Heart right ventricle (tissue), 16 donors: ENCODE measurements at regions of chr16 and their contacts with region 1.

Region 1: DNA sequence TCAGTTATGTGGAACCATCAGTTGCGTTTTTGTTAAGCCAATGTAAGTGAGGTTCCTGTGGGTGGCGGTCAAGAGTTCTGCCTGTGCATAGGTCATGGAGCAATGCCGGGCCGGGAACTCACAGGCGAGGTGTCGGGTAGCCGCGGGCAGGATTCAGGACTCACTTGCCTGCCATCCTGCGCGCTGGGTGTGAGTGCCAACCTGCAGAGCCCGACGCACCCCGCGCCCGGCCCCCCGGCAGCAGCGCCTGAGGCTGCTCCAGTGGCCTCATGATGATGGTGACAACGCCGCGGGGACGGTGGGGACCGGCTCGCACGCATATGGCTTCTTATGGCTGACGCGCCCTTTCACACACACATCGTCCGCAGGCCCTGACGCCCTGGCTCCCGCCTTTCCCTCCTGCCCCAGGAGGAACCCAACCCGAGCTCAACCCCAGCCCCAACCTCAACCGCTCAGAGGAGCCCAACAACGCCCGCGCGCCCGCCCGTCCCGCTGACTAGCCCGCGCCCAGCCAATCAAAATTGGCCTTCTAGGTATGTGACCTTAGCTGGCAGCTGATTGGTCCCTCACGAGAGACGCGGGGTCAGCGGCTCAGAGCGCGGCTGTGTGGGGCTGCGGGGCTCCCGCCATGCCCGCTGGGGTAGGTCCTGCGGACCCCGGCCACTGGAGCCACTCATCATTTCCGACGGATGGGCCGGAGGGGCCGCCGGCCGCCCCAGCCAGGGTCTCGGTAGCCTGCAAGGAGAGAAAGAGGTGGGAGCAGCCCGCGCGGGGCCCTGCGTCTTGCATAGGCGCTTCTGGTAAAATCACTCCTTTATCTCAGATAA is at the start of gene C16orf95:
- DNase-seq: peak; percentile 95 to 97
- ATAC-seq: peak; percentile 97 to 99 (median 99)
- H3K4me3 ChIP-seq: peak within 1 kb of the TSS; percentile 71 to 99 (median 86)
- H3K27ac ChIP-seq: peak within 1 kb of the TSS; percentile 74 to 98 (median 92)
- H3K4me1 ChIP-seq: peaks cover 0 to 12% (median 9%) of the 10 kb centered on the region in 9 donors
- H3K27me3 ChIP-seq: no peaks in the 10 kb centered on the region
- CTCF ChIP-seq: peak; percentile 41 to 78 (median 66)
- total RNA-seq, gene C16orf95: 2.8 to 5.1 (median 3.8) TPM

Region 2: GRCh38 chr16:87387942-87388817 is 71.0 kb after region 1 on chr16:
- intact Hi-C with region 1: loop called in 9 of 10 experiments (anchors 2 to 5 kb)
- DNase-seq: peak; percentile 82 to 97
- ATAC-seq: peak; percentile 59 to 85 (median 74)
- H3K4me3 ChIP-seq: peak overlapping the region in 7 of 10 donors; percentile 23 to 41 (median 29)
- H3K27ac ChIP-seq: peak overlapping the region; percentile 83 to 95 (median 88)
- H3K4me1 ChIP-seq: peaks cover 10 to 45% (median 41%) of the 10 kb centered on the region in 9 donors
- H3K27me3 ChIP-seq: no peaks in the 10 kb centered on the region
- CTCF ChIP-seq: no peak

Region 3: DNA sequence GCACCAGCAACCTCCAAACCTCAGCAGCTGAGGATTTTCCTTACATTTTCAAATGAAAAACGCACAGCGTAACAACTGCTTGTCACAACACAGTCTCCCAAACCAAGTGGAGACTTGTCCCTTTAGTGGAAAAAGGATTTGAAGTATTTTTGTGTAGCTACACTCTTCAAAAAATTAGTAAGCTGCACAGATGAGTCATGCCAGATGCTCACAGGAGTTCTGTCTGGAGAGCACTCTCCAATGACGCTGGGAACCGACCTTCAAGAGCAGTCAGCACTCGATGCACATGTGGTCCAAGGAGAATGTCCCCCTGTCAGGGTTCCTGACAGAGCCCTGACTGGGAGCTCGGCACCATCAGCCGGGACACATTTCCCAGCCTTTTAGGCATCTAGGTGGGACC is 114.8 kb after region 1 on chr16:
- intact Hi-C with region 1: no loop called
- DNase-seq: no peak
- ATAC-seq: peak in 2 of 8 donors; percentile 48 to 79
- H3K4me3 ChIP-seq: no peak overlapping the region
- H3K27ac ChIP-seq: no peak overlapping the region
- H3K4me1 ChIP-seq: peaks cover 16 to 48% (median 33%) of the 10 kb centered on the region in 9 donors
- H3K27me3 ChIP-seq: no peaks in the 10 kb centered on the region
- CTCF ChIP-seq: no peak